Head of caudate nucleus (tissue), 42 donors: ENCODE measurements at regions of chr1 and their contacts with region 1.

Region 1: GRCh38 chr1:93814059-93814794 is 64.8 kb downstream of the DNTTIP2 start:
- DNase-seq: peak in 39 of 42 donors; percentile 18 to 84 (median 62)

Region 2: GRCh38 chr1:93437976-93438605 is 376.1 kb before region 1 on chr1:
- intact Hi-C with region 1: loop called (anchors 10 kb)
- DNase-seq: no peak

Region 3: GRCh38 chr1:93629099-93630059 is 184.8 kb before region 1 on chr1:
- intact Hi-C with region 1: loop called (anchors 2 kb)
- DNase-seq: peak in 24 of 42 donors; percentile 24 to 81 (median 58)

Region 4: GRCh38 chr1:93692983-93693591 is 121.1 kb before region 1 on chr1:
- intact Hi-C with region 1: no loop called
- DNase-seq: no peak

Region 5: DNA sequence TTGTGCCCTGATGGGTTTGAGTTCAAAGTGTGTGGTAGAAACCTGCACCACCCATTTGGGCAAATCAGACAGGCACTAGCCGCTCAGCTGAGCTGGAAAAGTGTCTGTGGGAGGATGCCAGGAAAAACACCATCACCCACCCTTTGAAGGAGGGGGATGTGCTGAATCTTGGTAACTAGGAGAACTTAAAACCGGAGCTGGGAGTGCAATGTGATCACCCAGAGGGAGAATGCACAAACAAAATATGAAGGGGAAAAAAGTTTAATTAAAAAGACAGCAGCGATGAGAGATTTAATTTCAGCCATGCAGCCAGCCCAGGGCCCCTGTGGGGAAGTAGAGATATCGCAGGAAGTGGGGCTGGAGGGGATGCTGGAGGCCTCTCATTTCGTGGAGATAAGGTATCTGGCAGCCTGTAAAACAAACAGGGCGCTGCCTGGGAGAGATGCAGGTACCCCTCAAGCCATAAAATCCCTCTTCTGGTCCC is 45.8 kb before region 1 on chr1:
- intact Hi-C with region 1: no loop called
- DNase-seq: peak in 12 of 42 donors; percentile 10 to 59 (median 40)